ENCODE measurements at regions of chr6 and their contacts with region 1.

Region 1: DNA sequence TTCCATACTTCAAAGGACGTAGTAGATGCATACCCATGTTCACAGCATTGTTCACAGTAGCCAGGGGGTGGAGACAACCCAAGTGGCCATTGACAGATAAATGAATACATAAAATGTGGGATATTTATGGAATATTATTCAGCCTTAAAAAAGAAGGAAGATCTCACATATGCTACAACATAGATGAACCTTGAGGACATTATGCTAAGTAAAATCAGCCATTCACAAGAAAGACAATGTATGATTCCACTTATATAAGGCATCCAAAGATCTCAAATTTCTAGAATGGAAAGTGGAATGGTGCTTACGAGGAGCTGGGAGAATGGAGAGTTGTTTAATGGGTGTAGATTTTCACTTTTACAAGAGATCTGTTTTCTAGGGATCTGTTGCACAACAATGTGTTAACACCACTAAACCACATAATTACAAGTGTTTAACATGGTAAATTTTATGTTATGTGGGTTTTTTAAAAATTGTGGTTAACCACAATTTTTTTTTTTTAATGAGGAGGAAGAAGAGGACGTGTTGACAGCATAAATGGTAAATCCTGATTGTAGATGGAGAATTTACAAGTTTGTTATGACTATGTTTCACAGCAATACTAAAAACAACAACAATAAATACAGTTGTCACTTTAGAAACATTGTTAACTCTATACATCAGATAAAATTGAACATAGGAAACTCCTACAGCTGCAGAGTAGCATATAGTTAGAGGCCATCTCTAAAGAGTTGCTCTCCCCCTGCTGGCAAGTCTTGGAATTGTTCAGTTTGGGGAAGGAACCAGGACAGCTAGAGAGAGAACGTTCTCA is 41.6 kb downstream of the CCN2 start:
- DNase-seq: peak; percentile 47
- H3K4me3 ChIP-seq: no peak overlapping the region
- H3K27ac ChIP-seq: no peak overlapping the region
- H3K27me3 ChIP-seq: no peaks in the 10 kb centered on the region
- CTCF ChIP-seq: peak; percentile 94

Region 2: GRCh38 chr6:131795366-131795765 is 114.2 kb before region 1 on chr6:
- CTCF ChIA-PET with region 1: no interaction called
- POLR2A ChIA-PET with region 1: no interaction called
- DNase-seq: no peak
- H3K4me3 ChIP-seq: no peak overlapping the region
- H3K27ac ChIP-seq: no peak overlapping the region
- H3K27me3 ChIP-seq: no peaks in the 10 kb centered on the region
- CTCF ChIP-seq: no peak

Region 3: GRCh38 chr6:131894735-131895424 is 14.7 kb before region 1 on chr6:
- CTCF ChIA-PET with region 1: interaction called, 10 read pairs
- POLR2A ChIA-PET with region 1: no interaction called
- DNase-seq: no peak
- H3K4me3 ChIP-seq: no peak overlapping the region
- H3K27ac ChIP-seq: no peak overlapping the region
- H3K27me3 ChIP-seq: no peaks in the 10 kb centered on the region
- CTCF ChIP-seq: no peak

Region 4: DNA sequence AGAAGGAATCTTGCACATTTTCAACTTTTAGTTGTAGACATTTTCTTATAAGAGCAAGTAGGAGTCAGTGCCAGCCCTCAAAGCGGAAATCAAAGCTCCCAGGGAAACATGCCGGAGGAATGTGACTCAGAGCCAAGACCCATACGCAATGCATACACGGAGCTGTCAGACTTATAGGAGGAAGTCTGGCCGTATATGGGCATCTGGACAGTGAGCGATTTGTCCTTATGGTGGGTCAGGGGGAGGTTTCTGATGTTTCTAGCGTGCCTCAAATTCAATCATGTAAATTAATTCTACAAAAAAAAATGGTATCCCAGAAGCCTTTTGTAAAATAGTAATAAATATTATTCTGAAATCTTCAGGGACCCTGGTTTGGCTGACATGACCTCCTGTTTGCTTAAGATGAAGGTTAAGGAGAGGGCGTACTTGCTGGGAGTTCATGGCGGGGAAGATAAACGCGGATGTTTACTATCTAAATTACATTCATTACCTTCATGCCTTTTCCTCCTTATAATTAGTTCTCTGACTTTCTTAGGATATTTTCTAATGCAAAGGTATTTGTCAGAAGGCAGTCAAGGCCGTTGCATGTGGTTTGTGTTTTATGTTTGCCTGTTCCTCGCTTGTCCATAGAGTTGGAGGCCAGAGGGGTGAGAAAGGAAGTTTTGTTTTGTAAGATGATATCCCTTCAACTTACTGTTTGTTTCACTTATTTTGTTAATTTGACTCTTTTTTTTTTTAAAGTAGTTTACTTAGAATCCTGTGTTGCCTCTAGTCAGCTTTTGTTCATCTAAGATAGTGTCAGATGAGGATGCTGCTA is 45.4 kb after region 1 on chr6:
- CTCF ChIA-PET with region 1: no interaction called
- POLR2A ChIA-PET with region 1: no interaction called
- DNase-seq: peak; percentile 99
- H3K4me3 ChIP-seq: no peak overlapping the region; the same call in 1 of the 2 replicates
- H3K27ac ChIP-seq: peak overlapping the region; percentile 91
- H3K27me3 ChIP-seq: no peaks in the 10 kb centered on the region
- CTCF ChIP-seq: no peak

Region 5: DNA sequence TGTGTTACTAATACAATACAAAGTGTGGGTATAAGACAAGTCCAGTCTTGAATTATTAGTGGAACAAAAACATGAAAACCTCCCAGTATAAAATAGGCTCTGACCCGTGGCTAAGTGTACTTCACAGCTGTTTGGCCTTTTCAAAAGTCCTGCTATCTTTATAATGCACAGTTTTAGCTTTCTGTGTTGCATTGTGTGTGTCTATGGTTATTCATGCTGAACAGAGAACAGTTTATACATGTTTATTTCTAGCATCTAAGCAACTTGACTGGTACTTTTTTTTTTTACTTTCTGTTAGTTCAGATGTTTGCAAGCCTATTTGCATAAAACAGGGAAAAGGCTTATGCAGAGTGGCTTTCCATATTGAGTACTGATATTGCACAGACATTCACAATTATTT is 160.7 kb after region 1 on chr6:
- CTCF ChIA-PET with region 1: no interaction called
- POLR2A ChIA-PET with region 1: no interaction called
- DNase-seq: no peak
- H3K4me3 ChIP-seq: no peak overlapping the region
- H3K27ac ChIP-seq: no peak overlapping the region
- H3K27me3 ChIP-seq: no peaks in the 10 kb centered on the region
- CTCF ChIP-seq: no peak